KBM-7 (cell line): ENCODE measurements at regions of chr1 and their contacts with region 1.

Region 1: DNA sequence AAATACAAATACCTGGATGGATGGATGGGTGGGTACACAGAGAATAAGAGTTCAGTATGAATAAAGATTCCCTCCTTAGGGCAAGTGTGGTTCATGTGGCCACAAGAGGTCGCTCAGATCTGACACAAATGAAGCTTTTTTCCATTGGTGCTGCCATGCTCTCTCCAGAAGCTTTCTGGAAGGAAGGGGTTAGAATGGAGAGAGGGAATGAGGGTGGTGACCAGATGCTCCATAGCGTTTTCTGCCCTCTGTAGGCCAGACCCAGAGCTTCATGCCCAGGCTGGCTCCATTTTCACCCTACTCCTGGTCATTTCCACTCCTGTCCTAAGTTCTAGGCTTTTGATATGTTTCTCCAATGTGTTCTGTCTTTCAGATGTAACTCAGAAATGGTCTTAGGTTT is 3.3 kb upstream of the FCRL6 start:
- DNase-seq: peak; percentile 73

Region 2: GRCh38 chr1:159891275-159892157 is 92.6 kb after region 1 on chr1:
- in situ Hi-C with region 1: loop called (anchors 10 kb)
- DNase-seq: peak; percentile 79

Region 3: DNA sequence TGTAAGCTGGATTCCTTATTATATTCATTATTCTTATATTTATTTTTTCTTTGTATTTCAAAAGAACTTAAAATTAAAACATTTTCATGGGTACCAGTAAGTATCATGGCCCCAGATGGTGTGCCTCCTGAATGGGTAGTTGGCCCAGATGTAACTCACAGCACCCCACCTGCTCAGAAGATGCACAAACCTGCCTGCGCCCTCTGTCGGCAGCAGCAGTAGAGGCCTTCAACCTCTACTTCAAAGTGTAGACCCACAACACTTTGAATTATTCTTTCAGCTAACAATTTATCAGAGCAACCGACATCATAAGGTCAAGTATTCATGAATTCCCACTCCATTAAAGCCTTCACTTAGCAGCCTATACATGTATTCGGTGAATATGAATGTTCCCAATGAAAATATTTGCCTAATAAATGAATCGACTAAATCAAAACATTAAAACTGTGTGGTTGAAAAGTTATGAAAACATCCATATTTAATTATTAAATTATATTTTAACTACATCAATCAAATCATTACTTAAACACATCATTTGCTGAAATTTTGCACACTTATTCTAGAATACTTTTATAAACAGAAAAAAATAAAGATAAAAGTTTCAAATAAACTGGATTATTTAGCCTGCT is 207.5 kb after region 1 on chr1:
- in situ Hi-C with region 1: loop called (anchors 10 kb)
- DNase-seq: peak; percentile 69